GM23248 (cell line): ENCODE measurements at regions of chr6 and their contacts with region 1.

Region 1: GRCh38 chr6:150079604-150080003 is 10.7 kb upstream of the ULBP3 start:
- DNase-seq: no peak
- H3K4me3 ChIP-seq: no peak overlapping the region
- H3K27ac ChIP-seq: no peak overlapping the region
- H3K4me1 ChIP-seq: no peaks in the 10 kb centered on the region
- H3K27me3 ChIP-seq: 0 out of 2 replicates have a peak, but pooled peaks cover 11% of the 10 kb centered on the region

Region 2: GRCh38 chr6:150343434-150343833 is 263.8 kb after region 1 on chr6:
- in situ Hi-C with region 1: loop called (anchors 5 kb)
- DNase-seq: peak; percentile 64
- H3K4me3 ChIP-seq: no peak overlapping the region
- H3K27ac ChIP-seq: no peak overlapping the region
- H3K4me1 ChIP-seq: peaks cover 21% of the 10 kb centered on the region
- H3K27me3 ChIP-seq: no peaks in the 10 kb centered on the region

Region 3: GRCh38 chr6:150395398-150396009 is 315.9 kb after region 1 on chr6:
- in situ Hi-C with region 1: loop called (anchors 5 kb)
- DNase-seq: peak; percentile 80
- H3K4me3 ChIP-seq: no peak overlapping the region
- H3K27ac ChIP-seq: no peak overlapping the region
- H3K4me1 ChIP-seq: no peaks in the 10 kb centered on the region
- H3K27me3 ChIP-seq: no peaks in the 10 kb centered on the region